Tibial artery (tissue), 4 donors: ENCODE measurements at regions of chr4 and their contacts with region 1.

Region 1: DNA sequence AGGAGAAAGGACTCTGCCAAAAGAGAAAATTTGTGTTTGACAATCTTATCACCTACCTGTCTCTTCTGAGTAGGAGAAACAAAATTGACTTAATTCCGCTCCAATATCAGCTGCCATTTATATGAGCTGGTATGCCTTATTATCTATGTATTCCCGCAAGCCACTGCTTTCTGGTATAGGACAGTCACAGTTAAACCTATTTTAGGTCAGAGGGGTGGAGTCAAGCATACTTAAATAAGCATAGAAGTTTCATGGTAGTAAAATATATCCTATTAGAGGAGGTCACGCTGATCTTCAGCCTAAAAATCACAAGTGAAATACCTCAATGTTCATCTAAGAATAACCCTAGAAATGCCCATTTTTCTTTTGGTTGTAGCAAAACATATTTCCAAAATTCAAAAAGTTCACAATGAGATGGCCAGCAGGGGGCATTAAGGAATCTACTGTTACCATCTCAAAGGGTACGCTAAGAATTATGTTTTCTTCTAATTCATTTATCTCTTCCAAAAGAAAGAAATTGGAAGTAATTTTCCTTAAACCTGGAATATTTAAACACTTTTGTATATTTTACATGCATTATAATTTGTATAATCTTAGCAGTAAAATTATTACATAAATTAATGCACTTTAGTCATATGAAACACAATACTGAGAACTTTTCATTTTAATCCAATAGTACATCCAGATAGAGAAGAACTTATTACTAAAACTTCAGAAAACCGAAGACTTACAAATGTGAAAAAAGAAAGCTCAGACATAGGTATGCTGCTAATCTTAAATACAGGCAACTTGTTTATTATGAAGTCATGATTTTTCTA is 10.5 kb downstream of the PPAT start:
- DNase-seq: no peak
- H3K4me3 ChIP-seq: no peak overlapping the region
- H3K27ac ChIP-seq: no peak overlapping the region
- H3K4me1 ChIP-seq: peaks cover 0 to 6% (median 0%) of the 10 kb centered on the region in 4 donors
- H3K27me3 ChIP-seq: no peaks in the 10 kb centered on the region
- CTCF ChIP-seq: peak; percentile 55 to 64

Region 2: DNA sequence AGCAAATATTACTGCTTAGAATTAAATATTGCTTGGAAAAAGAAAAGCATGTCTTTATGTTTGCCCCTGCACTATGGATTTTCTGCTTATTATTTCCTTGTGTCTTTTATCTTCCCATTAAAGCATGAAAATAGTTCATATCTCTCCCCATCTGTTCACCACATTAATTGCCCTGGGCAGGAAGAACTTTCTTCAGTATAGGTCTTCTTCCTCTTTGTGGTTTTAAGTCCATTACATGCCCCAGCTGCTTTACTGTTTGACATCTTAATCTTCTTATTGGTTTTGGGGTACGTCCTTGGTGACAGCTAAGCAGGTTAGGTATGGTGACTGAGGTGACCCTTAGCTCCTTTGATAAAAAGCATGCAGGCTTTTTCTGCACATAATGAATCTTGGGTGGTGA is 195.0 kb before region 1 on chr4:
- intact Hi-C with region 1: no loop called
- DNase-seq: no peak
- H3K4me3 ChIP-seq: no peak overlapping the region
- H3K27ac ChIP-seq: no peak overlapping the region
- H3K4me1 ChIP-seq: no peaks in the 10 kb centered on the region
- H3K27me3 ChIP-seq: no peaks in the 10 kb centered on the region
- CTCF ChIP-seq: no peak

Region 3: DNA sequence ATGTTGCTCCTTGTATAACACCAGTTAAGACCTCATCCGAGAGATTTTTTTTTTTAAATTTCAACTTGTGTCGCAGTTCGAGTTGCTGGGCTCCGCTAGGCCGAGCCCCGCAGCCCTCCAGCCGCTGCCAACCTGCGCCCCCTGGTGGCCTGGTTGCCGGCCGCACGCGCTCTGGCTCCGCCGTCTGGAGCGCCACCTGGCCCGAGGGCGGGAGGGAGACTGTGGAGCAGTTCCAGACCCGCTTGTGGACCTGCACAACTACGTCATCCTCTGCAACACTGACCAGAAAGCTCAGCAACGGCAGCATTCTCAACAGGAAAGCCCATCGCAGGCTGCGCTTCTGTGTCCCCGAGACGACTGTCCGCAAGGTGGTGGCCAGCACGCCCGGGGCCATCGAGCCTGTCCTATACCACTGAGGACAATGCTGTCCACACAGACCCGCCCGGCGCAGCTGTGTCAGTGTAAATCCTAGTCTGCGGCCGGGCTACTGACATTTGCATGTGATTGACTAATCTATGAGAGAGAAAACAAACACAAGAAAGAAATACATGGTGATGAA is 119.7 kb after region 1 on chr4:
- intact Hi-C with region 1: loop called (anchors 5 kb)
- DNase-seq: peak; percentile 65 to 83
- H3K4me3 ChIP-seq: peak overlapping the region; percentile 36 to 45
- H3K27ac ChIP-seq: no peak overlapping the region
- H3K4me1 ChIP-seq: peaks cover 0 to 10% (median 3%) of the 10 kb centered on the region in 4 donors
- H3K27me3 ChIP-seq: no peaks in the 10 kb centered on the region
- CTCF ChIP-seq: peak; percentile 86 to 97